A673 (cell line): ENCODE measurements at regions of chr9 and their contacts with region 1.

Region 1: GRCh38 chr9:77598524-77598923 is 49.6 kb downstream of the GNA14 start:
- DNase-seq: peak; percentile 77
- H3K4me3 ChIP-seq: no peak overlapping the region
- H3K27ac ChIP-seq: peak overlapping the region; percentile 49
- H3K4me1 ChIP-seq: peaks cover 61% of the 10 kb centered on the region
- H3K27me3 ChIP-seq: no peaks in the 10 kb centered on the region
- CTCF ChIP-seq: no peak

Region 2: DNA sequence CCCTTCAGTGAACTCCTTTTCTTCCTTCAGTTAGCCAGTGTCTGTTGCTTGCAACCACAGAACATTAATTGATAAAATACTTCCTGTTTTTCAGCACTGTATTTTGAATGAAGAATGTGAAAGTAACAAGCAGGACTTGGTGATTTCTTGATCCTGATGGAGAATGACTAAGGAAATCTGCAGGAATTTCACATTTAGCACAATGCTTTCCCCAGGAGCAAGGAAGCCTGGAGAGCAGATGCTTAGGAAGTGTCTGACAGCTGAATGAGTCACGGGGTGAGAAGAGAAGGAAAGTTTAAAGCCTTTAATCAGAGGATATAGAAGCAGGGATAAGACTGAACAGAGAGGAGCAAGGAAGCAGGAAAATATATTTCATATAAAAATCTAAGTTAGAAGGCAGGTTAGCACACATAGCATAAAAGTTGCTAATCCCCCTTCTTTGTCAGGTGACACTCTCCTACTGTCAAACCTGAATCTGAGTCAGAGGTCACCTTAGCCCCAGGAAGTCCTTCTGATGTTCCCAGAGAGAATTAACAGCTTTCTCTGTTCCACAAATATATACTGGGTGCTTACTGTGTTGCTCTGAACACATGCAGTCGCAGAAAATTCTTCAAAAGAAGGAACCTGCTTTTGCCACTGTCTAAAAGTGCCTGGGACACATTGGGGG is 10.1 kb before region 1 on chr9:
- CTCF ChIA-PET with region 1: no interaction called
- POLR2A ChIA-PET with region 1: interaction called, 12 read pairs
- intact Hi-C with region 1: no loop called
- DNase-seq: peak; percentile 49
- H3K4me3 ChIP-seq: no peak overlapping the region
- H3K27ac ChIP-seq: peak overlapping the region; percentile 44
- H3K4me1 ChIP-seq: peaks cover 15% of the 10 kb centered on the region
- H3K27me3 ChIP-seq: no peaks in the 10 kb centered on the region
- CTCF ChIP-seq: no peak